ENCODE measurements at regions of chr7 and their contacts with region 1.

Region 1: GRCh38 chr7:135558337-135558767 is 635 bp downstream of the NUP205 start:
- DNase-seq: peak; percentile 77
- H3K4me3 ChIP-seq: peak overlapping the region; percentile 60 to 73 (median 71)
- H3K27ac ChIP-seq: peak overlapping the region; percentile 88
- H3K4me1 ChIP-seq: peaks cover 10% of the 10 kb centered on the region
- H3K27me3 ChIP-seq: no peaks in the 10 kb centered on the region
- CTCF ChIP-seq: peak; percentile 32 to 50
- POLR2A ChIP-seq: no peak

Region 2: DNA sequence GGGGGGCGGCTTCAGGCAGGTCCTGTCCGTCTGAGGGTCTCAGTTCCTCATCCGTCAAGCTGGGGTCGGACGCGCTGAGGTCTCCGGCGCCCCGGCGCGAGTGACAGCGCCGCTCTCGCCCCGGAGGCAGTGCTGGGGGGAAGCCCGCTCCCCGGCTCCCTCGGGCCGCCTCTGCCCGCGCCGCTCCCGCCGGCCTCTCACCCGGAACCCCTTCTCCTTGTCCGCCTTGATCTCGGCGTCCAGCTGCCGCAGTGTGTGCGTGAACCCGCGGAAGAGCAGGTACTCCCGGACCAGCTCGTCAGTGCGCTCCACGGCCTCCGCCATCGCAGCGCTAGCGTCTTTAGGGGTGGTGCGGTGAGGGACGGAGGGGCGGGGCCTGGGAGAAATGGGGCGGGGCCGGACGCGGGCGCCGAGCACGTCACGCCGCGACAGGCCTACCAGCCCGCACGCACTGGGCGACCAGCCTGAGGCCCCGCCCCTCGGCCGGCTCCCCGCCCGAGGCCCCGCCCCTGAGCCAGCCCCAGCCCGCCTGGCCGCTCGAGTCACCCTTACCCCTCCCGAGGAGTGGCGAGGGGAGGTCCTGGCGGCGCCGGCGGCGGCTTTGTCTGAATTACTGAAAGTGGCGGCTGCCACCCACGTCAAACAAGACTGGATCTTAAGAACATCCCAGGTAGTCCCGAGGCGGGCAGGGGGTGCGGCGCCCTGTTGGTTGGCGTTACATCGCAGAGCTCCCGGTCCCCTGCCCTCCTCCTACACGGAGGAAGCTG is 347.0 kb before region 1 on chr7 and contains the start of gene WDR91:
- CTCF ChIA-PET with region 1: no interaction called
- POLR2A ChIA-PET with region 1: no interaction called
- dilution Hi-C with region 1: no loop called
- intact Hi-C with region 1: loop called (anchors 1 kb)
- DNase-seq: peak; percentile 97
- H3K4me3 ChIP-seq: peak within 1 kb of the TSS; percentile 86 to 94 (median 91)
- H3K27ac ChIP-seq: peak within 1 kb of the TSS; percentile 93
- H3K4me1 ChIP-seq: peaks cover 8% of the 10 kb centered on the region
- H3K27me3 ChIP-seq: no peaks in the 10 kb centered on the region
- CTCF ChIP-seq: no peak
- POLR2A ChIP-seq: peak; percentile 77
- total RNA-seq, gene WDR91: 7.0 and 9.8 TPM in 2 replicates

Region 3: DNA sequence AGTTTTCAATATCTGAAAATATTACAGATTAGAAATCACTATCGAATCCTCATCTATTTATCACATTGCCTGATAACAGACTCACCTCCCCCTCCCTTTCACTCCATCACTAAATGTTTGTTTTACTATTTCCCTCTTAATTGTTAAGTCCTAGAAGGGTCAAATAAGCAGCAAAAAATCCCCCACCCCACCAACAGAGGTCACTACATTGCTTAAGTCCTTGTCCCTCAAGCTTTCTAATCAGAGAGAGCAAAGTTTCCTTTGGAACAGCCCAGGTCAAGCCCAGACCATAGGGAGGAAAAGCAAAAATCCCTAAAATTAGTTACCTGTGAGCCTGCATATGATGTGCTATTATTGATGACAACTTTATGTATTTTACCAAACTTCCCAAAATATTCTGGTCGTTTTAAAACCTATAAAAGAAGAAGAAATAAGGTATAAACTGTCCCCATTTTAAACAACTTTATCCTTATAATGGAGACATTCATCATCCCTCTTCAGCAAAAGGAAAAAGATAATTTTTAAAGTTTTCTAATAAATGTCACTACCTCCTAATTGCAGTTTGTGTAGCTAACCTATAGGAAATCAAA is 143.4 kb before region 1 on chr7:
- CTCF ChIA-PET with region 1: no interaction called
- POLR2A ChIA-PET with region 1: no interaction called
- dilution Hi-C with region 1: no loop called
- intact Hi-C with region 1: loop called (anchors 1 kb)
- DNase-seq: peak; percentile 76
- H3K4me3 ChIP-seq: no peak overlapping the region
- H3K27ac ChIP-seq: no peak overlapping the region
- H3K4me1 ChIP-seq: peaks cover 15% of the 10 kb centered on the region
- H3K27me3 ChIP-seq: no peaks in the 10 kb centered on the region
- CTCF ChIP-seq: peak; percentile 46 to 49
- POLR2A ChIP-seq: no peak

Region 4: GRCh38 chr7:135578569-135578968 is 20.2 kb after region 1 on chr7:
- CTCF ChIA-PET with region 1: no interaction called
- POLR2A ChIA-PET with region 1: no interaction called
- dilution Hi-C with region 1: no loop called
- intact Hi-C with region 1: no loop called
- DNase-seq: no peak
- H3K4me3 ChIP-seq: no peak overlapping the region
- H3K27ac ChIP-seq: no peak overlapping the region
- H3K4me1 ChIP-seq: no peaks in the 10 kb centered on the region
- H3K27me3 ChIP-seq: no peaks in the 10 kb centered on the region
- CTCF ChIP-seq: no peak
- POLR2A ChIP-seq: no peak

Region 5: GRCh38 chr7:135757719-135758411 is 199.5 kb after region 1 on chr7:
- CTCF ChIA-PET with region 1: no interaction called
- POLR2A ChIA-PET with region 1: no interaction called
- dilution Hi-C with region 1: no loop called
- intact Hi-C with region 1: no loop called
- DNase-seq: peak; percentile 71
- H3K4me3 ChIP-seq: peak overlapping the region in 1 of 3 experiments; percentile 61
- H3K27ac ChIP-seq: peak overlapping the region; percentile 60
- H3K4me1 ChIP-seq: peaks cover 27% of the 10 kb centered on the region
- H3K27me3 ChIP-seq: no peaks in the 10 kb centered on the region
- CTCF ChIP-seq: no peak
- POLR2A ChIP-seq: peak; percentile 58

Measured in endothelial cell of umbilical vein (primary cell).